ENCODE measurements at regions of chr1 and their contacts with region 1.

Region 1: GRCh38 chr1:15028102-15028501 is 125.4 kb upstream of the TMEM51 start:
- DNase-seq: no peak
- H3K4me3 ChIP-seq: no peak overlapping the region
- H3K27ac ChIP-seq: no peak overlapping the region
- H3K4me1 ChIP-seq: peaks cover 0 to 17% (median 12%) of the 10 kb centered on the region in 4 experiments; a peak in 6 of 7 replicates
- H3K27me3 ChIP-seq: no peaks in the 10 kb centered on the region
- CTCF ChIP-seq: no peak
- EP300 ChIP-seq: no peak
- POLR2A ChIP-seq: no peak
- RAD21 ChIP-seq: no peak

Region 2: DNA sequence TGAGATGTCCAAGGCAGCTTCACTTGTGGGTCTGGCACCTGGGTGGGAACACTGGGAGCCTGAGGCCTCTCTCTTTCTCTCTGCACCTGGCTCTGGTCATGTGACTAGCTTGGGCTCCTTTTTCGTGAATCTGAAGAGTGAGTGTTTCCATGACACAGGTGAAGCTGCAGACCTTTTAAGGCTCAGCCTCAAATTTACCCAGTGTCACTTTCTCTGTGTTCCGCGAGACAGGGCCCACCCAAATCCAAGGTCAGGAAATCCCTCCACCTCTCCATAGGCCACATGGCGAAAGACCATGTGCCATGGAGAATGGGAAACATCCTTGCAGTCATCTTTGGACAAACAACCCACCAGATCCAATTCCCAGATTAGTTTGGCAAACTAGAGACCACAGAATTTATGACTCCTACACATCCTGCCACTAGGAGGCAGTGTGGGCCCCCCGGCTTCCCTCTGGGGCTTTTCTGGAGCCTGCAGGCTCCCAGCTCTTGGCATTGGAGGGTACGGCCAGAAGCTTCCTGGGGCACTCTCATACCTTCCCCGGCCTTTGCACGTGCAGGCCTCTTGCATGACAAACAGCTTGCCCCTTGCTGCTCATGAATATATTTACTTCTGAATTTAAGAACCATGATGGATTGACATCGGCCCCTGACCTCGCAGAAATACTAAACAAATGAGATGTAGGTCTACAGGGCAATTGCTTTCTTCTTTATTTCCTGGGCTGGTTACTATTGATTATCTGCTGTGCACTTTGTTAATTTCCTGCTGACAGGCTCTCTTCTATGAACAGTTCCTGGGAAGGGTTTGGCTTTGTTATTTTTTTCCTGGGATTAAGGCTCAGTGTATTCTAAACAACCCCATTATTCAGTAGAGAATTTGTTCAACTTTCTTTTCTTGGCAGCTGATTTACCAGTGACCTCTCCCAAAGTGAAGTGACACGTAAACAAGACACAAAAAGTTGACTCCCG is 248.9 kb before region 1 on chr1:
- CTCF ChIA-PET with region 1: interaction called, 35 read pairs
- POLR2A ChIA-PET with region 1: no interaction called
- DNase-seq: peak; percentile 43 to 93
- H3K4me3 ChIP-seq: no peak overlapping the region
- H3K27ac ChIP-seq: no peak overlapping the region
- H3K4me1 ChIP-seq: peaks cover 3 to 22% (median 9%) of the 10 kb centered on the region in 4 experiments; a peak in 6 of 7 replicates
- H3K27me3 ChIP-seq: no peaks in the 10 kb centered on the region
- CTCF ChIP-seq: peak; percentile 71 to 88 (median 85)
- EP300 ChIP-seq: no peak
- POLR2A ChIP-seq: no peak
- RAD21 ChIP-seq: peak; percentile 65 to 83

Region 3: DNA sequence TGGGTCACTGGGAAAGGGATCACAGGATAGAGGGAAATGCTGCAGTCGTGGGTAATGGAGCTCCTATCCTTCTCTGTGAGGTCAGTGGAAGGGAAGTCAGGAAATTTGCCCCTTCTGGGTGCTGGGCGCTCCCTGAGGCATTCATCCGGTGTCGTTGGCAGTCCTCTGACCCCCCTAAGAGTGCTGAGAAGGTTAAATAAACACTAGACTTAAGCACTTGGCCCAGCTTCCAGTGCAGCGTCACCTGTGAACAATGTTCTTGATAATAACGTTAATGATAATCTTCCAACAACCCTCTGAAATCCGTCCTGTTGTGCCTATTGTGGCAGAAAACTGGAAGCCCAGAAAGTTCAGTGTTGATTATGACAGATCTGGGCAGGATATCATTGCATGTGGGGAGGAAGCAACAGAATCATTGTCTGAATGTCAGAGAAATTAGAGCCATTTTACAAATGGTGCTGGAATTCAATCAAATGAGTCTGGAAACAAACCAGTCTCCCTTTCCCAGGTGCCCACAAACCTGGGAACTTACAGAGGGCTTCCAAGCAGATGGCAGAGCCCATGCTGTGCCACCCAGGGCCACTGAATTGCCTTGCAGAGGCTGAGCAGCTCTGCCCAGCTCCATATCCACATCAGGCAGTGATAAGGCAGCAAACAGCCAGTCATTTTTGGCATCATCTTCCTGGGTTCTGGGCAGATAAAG is 212.8 kb before region 1 on chr1:
- CTCF ChIA-PET with region 1: interaction called, 12 read pairs
- POLR2A ChIA-PET with region 1: no interaction called
- DNase-seq: no peak
- H3K4me3 ChIP-seq: no peak overlapping the region
- H3K27ac ChIP-seq: no peak overlapping the region
- H3K4me1 ChIP-seq: peaks cover 0 to 3% (median 0%) of the 10 kb centered on the region in 4 experiments; a peak in 1 of 7 replicates
- H3K27me3 ChIP-seq: no peaks in the 10 kb centered on the region; a peak in 1 of 7 replicates
- CTCF ChIP-seq: no peak
- EP300 ChIP-seq: no peak
- POLR2A ChIP-seq: no peak
- RAD21 ChIP-seq: no peak

Region 4: GRCh38 chr1:14961661-14962267 is 66.3 kb before region 1 on chr1:
- CTCF ChIA-PET with region 1: interaction called, 17 read pairs
- POLR2A ChIA-PET with region 1: no interaction called
- DNase-seq: no peak
- H3K4me3 ChIP-seq: no peak overlapping the region
- H3K27ac ChIP-seq: no peak overlapping the region
- H3K4me1 ChIP-seq: peaks cover 0 to 3% (median under 1%) of the 10 kb centered on the region in 4 experiments; a peak in 2 of 7 replicates
- H3K27me3 ChIP-seq: no peaks in the 10 kb centered on the region
- CTCF ChIP-seq: no peak
- EP300 ChIP-seq: no peak
- POLR2A ChIP-seq: no peak
- RAD21 ChIP-seq: no peak

Region 5: GRCh38 chr1:15001308-15001900 is 26.7 kb before region 1 on chr1:
- CTCF ChIA-PET with region 1: interaction called, 17 read pairs
- POLR2A ChIA-PET with region 1: interaction called, 3 read pairs
- DNase-seq: no peak
- H3K4me3 ChIP-seq: no peak overlapping the region
- H3K27ac ChIP-seq: no peak overlapping the region
- H3K4me1 ChIP-seq: peaks cover 0 to 3% (median 0%) of the 10 kb centered on the region in 4 experiments; a peak in 2 of 7 replicates
- H3K27me3 ChIP-seq: no peaks in the 10 kb centered on the region
- CTCF ChIP-seq: no peak
- EP300 ChIP-seq: no peak
- POLR2A ChIP-seq: no peak
- RAD21 ChIP-seq: no peak

Region 6: GRCh38 chr1:15014516-15014915 is 13.6 kb before region 1 on chr1:
- CTCF ChIA-PET with region 1: interaction called, 45 read pairs
- POLR2A ChIA-PET with region 1: no interaction called
- DNase-seq: no peak
- H3K4me3 ChIP-seq: no peak overlapping the region
- H3K27ac ChIP-seq: no peak overlapping the region
- H3K4me1 ChIP-seq: peaks cover 0 to 2% (median under 1%) of the 10 kb centered on the region in 4 experiments; a peak in 2 of 7 replicates
- H3K27me3 ChIP-seq: no peaks in the 10 kb centered on the region
- CTCF ChIP-seq: no peak
- EP300 ChIP-seq: no peak
- POLR2A ChIP-seq: no peak
- RAD21 ChIP-seq: no peak

Region 7: DNA sequence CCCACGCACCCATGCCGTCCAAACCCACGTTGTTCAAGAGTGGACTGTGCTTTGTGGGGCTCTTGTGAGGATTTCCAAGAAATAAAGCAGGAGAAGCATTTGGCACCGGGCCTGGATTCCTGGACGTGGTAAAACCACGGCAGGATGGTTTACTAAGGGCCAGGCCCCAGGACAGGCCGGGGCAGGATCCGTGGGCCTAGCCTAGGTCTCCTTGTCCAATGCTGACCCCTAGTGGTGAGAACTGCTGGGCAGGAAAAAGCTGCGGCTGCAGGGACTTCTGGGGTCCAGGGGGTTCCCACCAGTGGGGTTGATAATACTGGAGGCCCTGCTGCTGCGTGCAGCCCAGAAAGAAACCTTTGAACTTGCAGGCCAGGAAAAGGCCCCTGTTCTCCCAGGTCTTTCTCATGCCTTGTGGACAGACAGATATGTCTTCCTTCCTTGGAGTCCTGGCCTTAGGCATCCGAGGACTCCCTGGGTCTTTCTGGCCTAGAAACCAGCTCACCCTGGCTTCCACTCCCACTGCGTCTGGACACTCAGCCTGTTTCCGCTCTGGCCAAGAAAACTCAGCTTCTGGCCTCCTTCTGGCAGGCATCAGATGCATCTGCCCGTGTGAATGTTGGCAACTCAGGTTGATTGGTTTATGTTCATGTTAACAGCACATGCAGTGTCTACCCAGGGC is 18.5 kb after region 1 on chr1:
- CTCF ChIA-PET with region 1: interaction called, 21 read pairs
- POLR2A ChIA-PET with region 1: no interaction called
- DNase-seq: peak; percentile 36 to 94
- H3K4me3 ChIP-seq: no peak overlapping the region
- H3K27ac ChIP-seq: no peak overlapping the region
- H3K4me1 ChIP-seq: no peaks in the 10 kb centered on the region
- H3K27me3 ChIP-seq: no peaks in the 10 kb centered on the region
- CTCF ChIP-seq: peak; percentile 87 to 95 (median 92)
- EP300 ChIP-seq: no peak
- POLR2A ChIP-seq: no peak
- RAD21 ChIP-seq: peak; percentile 98 to 99

Region 8: DNA sequence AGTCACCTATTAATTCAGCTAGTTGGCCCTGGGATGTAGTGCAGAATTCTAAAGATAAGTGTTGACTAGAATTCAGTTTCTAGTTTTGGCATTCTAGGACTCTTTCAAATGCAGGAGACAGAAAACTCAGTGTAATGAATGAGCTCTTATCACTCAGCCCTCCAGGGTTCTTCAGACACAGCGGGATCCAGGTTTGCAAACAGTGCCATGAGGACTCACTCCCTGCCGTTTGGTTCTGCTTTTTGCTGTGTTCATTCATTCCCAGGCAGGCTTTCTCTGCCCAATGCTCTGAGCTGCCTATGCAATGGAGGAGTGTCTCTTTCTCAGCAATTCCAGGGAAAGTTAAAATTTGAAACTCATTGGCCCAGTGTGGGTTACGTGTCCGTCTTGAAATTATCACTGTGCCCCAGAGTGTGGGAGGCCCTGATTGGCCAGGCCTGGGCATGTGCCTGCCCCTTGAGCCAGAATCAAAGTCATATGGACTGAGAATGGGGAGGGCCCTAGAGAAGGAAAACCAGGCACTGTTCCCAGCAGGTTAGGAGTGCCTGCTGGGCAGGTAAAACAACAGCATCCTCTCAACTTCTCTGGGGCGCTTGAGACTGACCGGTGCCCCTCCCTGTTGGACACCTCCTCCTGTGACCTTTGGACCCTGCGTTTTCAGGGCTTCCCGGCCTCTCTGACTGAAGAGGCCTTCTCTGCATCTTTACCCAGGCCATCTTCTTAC is 168.9 kb after region 1 on chr1:
- CTCF ChIA-PET with region 1: no interaction called
- POLR2A ChIA-PET with region 1: no interaction called
- DNase-seq: no peak
- H3K4me3 ChIP-seq: peak overlapping the region in 3 of 4 experiments; percentile 14 to 32 (median 16); a peak in 3 of 8 replicates
- H3K27ac ChIP-seq: no peak overlapping the region
- H3K4me1 ChIP-seq: peaks cover 6 to 32% (median 15%) of the 10 kb centered on the region in 4 experiments; a peak in 6 of 7 replicates
- H3K27me3 ChIP-seq: no peaks in the 10 kb centered on the region
- CTCF ChIP-seq: no peak
- EP300 ChIP-seq: no peak
- POLR2A ChIP-seq: no peak
- RAD21 ChIP-seq: no peak

Measured in H1 (cell line).